ENCODE measurements at regions of chr2 and their contacts with region 1.

Region 1: DNA sequence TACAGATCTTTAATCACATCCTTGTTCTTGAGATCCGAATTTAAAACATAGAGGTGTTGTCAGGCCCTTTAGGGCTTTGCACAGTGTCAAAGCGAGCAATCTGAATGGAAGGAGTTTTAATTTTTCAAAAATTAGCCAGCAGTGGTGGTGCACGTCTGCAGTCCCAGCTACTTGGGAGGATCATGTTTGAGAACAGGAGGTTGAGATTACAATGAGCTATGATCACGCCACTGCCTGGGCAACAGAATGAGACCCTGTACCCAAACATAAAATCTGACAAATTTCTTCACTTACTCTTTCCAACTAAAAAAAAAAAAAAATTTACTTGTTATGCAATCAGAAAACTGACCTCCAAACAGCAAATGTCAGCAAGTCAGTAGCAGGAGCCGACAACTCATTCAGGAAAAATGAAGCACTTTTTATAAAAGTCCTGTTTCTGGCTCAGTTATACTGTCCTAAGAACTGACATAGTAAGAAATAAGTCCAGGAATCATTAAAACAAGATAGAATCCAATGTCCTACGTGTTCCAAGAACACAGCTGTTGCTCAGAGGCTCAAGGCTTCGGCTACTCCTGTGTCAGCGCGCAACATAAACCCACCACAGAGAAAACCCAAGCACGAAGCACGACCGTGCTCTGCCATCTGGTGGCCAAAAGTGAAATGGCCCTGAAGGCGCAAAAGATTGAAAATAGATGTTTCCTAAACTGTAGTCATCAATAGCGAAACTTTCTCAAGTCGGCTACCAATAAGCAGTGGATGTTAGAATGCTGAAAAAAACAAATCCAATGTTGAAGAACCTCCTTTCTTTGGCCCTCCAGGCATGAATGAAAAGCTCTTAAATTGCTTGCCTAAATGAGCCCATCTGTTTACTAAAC is 138.1 kb downstream of the INO80D start:
- DNase-seq: peak in 4 of 5 donors; percentile 57 to 73 (median 62)
- ATAC-seq: peak; percentile 87 to 91 (median 90)
- H3K4me3 ChIP-seq: no peak overlapping the region
- H3K27ac ChIP-seq: peak overlapping the region in 4 of 12 donors; percentile 1 to 46 (median 8)
- H3K4me1 ChIP-seq: peaks cover 0 to 22% (median 0%) of the 10 kb centered on the region in 12 donors
- H3K27me3 ChIP-seq: no peaks in the 10 kb centered on the region
- CTCF ChIP-seq: peak; percentile 85 to 97 (median 92)
- POLR2A ChIP-seq: no peak

Region 2: GRCh38 chr2:205975082-205975949 is 27.5 kb after region 1 on chr2:
- intact Hi-C with region 1: loop called in 1 of 10 experiments (anchors 1 kb)
- DNase-seq: no peak
- ATAC-seq: peak in 1 of 4 donors; percentile 31
- H3K4me3 ChIP-seq: no peak overlapping the region
- H3K27ac ChIP-seq: no peak overlapping the region
- H3K4me1 ChIP-seq: no peaks in the 10 kb centered on the region
- H3K27me3 ChIP-seq: peaks cover 0 to 3% (median 0%) of the 10 kb centered on the region in 9 donors
- CTCF ChIP-seq: no peak
- POLR2A ChIP-seq: no peak

Measured in heart left ventricle (tissue), 16 donors.